ENCODE measurements at regions of chr9 and their contacts with region 1.

Region 1: GRCh38 chr9:36166101-36166927 is 2.9 kb upstream of the CCIN start:
- DNase-seq: no peak
- H3K4me3 ChIP-seq: peak overlapping the region; percentile 57
- H3K27me3 ChIP-seq: no peaks in the 10 kb centered on the region
- CTCF ChIP-seq: peak; percentile 80

Region 2: DNA sequence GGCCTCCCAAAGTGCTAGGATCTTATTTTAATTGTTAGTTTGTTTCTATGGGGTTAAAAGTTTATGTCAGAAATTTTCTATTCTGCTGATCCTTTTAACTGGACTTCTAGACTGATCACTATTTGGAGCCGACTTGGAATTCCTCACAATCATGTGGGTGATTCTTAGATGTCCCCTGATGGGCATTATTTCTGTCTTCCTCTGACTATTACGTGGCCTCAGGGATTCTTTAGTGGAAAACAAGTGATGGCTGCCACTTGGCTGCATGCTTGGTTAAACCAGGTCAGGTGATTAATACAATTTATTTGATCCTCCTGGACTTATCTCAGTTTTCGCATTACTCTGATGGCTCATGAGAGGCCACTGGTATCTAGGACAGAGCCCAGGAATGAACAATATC is 176.2 kb before region 1 on chr9:
- CTCF ChIA-PET with region 1: no interaction called
- POLR2A ChIA-PET with region 1: no interaction called
- DNase-seq: no peak
- H3K4me3 ChIP-seq: no peak overlapping the region
- H3K27me3 ChIP-seq: no peaks in the 10 kb centered on the region
- CTCF ChIP-seq: no peak

Region 3: DNA sequence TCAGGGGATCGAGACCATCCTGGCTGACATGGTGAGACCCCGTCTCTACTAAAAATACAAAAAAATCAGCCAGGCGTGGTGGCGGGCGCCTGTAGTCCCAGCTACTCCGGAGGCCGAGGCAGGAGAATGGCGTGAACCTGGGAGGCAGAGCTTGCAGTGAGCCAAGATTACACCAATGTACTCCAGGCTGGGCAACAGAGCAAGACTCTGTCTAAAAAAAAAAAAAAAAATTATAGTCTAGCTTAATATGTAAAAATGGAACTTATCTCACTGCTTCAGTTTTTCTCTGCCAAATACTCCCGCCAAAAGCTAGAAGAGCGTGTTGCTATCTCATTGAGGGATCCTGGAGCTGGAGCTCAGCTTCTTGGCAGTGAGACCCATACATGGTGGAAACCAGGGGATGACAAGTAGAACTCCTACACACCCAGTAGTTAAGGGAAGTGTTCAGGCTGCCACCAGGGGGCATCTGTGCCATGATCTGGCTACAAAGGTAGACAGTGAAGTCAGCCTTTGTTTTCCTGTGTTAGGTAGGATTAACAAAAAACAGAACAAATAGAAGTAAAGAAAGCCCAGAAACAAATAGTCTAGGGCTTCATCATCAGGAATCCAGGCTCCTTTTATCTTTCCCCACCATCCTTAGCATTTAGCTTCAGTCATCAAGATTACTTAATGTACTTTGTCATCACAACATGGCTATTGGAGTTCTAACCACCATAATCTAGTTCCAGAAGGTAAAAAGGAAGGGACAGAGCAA is 63.4 kb before region 1 on chr9:
- CTCF ChIA-PET with region 1: interaction called, 32 read pairs
- POLR2A ChIA-PET with region 1: no interaction called
- DNase-seq: no peak
- H3K4me3 ChIP-seq: no peak overlapping the region
- H3K27me3 ChIP-seq: no peaks in the 10 kb centered on the region
- CTCF ChIP-seq: peak; percentile 59

Region 4: DNA sequence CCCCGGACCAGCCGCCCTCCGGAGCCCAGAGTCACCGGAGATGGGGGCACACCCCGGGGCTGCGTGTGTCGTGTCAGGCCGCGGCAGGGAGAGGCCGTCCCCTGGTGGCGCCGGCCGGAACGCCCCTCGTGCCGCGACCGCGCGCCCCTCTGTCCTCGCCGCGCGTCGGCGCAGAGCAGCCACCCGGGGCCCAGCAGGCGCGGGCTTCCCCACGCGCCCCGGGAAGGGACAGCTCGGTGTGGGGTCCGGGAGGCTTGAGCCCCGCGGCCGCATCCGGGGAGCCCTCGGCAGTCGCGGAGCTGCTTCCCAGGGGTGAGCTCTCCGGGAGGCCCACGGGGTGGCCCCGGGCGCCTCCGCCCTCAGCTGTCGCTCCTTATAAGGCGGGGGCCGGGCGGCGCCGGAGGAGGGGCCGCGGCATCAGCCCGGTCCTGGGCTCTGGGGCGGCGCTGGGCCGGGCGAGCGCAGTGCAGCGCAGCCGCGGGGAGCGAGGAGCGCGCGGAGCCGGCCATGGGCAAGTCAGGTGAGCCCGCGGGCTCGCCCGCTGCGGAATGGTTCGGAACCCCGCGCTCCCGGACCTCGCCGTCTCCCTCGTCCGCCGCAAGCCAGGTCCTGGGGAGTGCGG is 29.9 kb before region 1 on chr9 and contains the start of gene GLIPR2:
- CTCF ChIA-PET with region 1: interaction called, 77 read pairs
- POLR2A ChIA-PET with region 1: interaction called, 9 read pairs
- DNase-seq: no peak
- H3K4me3 ChIP-seq: peak within 1 kb of the TSS; percentile 51
- H3K27me3 ChIP-seq: no peaks in the 10 kb centered on the region
- CTCF ChIP-seq: peak; percentile 18; the same call in 1 of the 2 replicates
- polyA plus RNA-seq, gene GLIPR2: 23.7 and 26.3 TPM in 2 replicates

Region 5: GRCh38 chr9:36148311-36149051 is 17.8 kb before region 1 on chr9:
- CTCF ChIA-PET with region 1: interaction called, 77 read pairs
- POLR2A ChIA-PET with region 1: interaction called, 3 read pairs
- DNase-seq: peak; percentile 79
- H3K4me3 ChIP-seq: no peak overlapping the region
- H3K27me3 ChIP-seq: no peaks in the 10 kb centered on the region
- CTCF ChIP-seq: no peak

Region 6: DNA sequence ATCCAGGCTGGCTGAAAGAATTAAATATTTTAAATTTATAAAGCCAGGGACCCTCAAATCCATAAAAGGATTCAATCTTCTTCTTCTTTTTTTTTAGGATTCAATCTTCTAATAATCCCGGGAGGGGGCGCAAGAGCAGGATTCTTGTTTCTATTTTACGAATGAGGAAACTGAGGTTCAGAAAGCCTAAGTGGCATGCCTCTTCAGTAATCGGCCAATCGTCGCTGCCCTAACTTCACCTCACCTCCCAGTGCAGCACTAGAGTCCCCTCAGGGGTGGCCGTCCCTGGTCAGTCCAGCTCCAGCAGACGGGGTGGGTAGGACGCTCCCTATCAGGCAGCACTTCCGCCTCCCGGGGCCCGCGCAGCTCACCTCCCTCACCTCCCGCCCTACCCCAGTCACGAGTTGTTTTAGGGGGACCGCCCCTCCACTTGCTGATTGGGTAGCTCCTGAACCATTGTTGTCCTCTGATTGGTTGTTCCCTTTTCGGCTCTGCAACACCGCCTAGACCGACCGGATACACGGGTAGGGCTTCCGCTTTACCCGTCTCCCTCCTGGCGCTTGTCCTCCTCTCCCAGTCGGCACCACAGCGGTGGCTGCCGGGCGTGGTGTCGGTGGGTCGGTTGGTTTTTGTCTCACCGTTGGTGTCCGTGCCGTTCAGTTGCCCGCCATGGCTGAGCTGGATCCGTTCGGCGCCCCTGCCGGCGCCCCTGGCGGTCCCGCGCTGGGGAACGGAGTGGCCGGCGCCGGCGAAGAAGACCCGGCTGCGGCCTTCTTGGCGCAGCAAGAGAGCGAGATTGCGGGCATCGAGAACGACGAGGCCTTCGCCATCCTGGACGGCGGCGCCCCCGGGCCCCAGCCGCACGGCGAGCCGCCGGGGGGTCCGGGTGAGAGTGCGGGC is 24.3 kb after region 1 on chr9 and contains the start of gene CLTA:
- CTCF ChIA-PET with region 1: interaction called, 43 read pairs
- POLR2A ChIA-PET with region 1: no interaction called
- DNase-seq: peak; percentile 94
- H3K4me3 ChIP-seq: peak within 1 kb of the TSS; percentile 76
- H3K27me3 ChIP-seq: no peaks in the 10 kb centered on the region
- CTCF ChIP-seq: peak; percentile 66
- polyA plus RNA-seq, gene CLTA: 197 and 212 TPM in 2 replicates

Region 7: DNA sequence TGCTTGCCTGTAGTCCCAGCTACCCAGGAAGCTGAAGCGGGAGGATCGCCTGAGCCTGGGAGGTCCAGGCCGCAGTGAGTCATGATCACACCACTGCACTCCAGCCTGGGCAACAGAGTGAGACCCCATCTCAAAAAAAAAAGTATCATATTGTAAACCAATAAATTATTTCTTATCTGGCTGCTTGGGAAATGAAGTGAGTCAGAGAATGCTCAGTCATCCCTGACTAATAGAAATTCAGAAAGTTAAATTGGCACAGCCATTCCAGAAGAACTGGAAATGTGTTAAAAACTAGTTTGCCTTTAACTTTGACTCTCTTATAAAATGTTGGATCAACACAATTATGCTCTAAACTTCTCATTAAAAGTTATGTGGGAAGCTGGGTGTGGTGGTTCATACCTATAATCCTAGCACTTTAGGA is 101.7 kb after region 1 on chr9:
- CTCF ChIA-PET with region 1: no interaction called
- POLR2A ChIA-PET with region 1: no interaction called
- DNase-seq: peak; percentile 26
- H3K4me3 ChIP-seq: no peak overlapping the region
- H3K27me3 ChIP-seq: no peaks in the 10 kb centered on the region
- CTCF ChIP-seq: no peak

Region 8: GRCh38 chr9:36337865-36338264 is 171.6 kb after region 1 on chr9:
- CTCF ChIA-PET with region 1: no interaction called
- POLR2A ChIA-PET with region 1: no interaction called
- DNase-seq: no peak
- H3K4me3 ChIP-seq: no peak overlapping the region
- H3K27me3 ChIP-seq: no peaks in the 10 kb centered on the region
- CTCF ChIP-seq: no peak

Region 9: DNA sequence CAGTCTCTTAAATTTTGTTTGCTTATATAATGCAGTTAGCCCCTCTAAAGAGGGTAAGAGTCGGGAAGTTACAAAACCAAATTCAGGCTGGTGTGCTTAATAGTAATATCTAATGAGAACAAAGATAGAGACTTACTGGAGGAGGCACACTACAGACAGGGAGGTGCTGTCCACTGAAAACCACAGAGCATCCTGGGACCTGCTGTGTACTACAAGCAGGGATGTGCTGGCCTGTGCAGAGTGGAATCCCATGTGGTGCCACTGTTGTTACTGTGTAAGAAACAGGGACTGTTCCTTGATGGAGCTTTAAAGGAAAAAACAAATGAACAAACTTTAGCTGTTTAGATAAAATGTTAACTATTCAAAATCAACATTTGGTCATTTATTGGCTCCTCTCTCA is 191.3 kb after region 1 on chr9:
- CTCF ChIA-PET with region 1: no interaction called
- POLR2A ChIA-PET with region 1: no interaction called
- DNase-seq: no peak
- H3K4me3 ChIP-seq: no peak overlapping the region
- H3K27me3 ChIP-seq: no peaks in the 10 kb centered on the region
- CTCF ChIP-seq: no peak